Naive thymus-derived CD4-positive, alpha-beta T cell (primary cell): ENCODE measurements at regions of chr22 and their contacts with region 1.

Region 1: DNA sequence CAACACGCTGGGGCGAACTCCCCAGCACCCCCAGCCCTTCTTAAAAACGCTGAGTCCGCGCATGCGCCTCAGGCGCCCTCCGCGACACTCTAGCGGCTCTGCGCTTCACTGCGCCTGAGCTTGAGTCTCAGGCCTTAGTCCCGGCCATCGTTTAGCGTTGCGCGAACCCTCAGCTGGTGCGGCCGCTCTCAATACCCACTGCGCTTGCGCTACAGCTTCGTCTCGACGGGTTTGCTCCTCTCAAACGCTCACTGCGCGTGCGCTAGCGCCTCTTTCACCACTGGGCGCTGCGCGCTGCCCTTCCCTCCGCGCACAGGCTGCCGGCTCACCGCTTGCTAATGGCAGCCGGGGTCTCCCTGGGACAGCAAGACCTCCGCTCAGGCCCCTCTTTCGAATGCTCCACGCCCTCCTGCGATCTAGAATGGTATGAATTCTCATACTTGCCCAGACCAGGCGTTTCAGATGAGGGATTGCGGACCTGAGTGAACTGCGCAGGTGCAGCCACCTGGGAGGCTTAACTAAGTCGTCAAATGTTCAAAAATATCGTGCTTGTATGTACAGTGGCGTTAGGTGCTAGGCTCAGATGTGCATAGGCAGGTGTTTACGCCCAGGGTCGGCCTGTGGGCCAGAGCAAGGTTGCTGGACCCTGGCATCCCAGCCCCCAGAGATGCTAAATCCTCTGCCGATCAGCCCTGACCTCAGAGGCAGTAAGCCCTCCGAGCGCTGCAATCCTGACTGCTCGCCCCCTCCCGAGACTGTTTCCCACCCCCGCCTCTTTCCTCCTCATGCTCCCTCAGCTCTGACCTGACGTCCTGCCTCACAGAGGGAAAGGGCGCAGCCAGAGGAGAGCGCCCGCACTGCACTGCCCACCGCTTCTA is at the start of gene SLC2A11:
- DNase-seq: peak; percentile 84 to 91 (median 88)
- ATAC-seq: peak; percentile 97
- H3K4me3 ChIP-seq: peak within 1 kb of the TSS; percentile 99
- H3K4me3 Mint-ChIP-seq: peak within 1 kb of the TSS; percentile 87 to 99 (median 95)
- H3K27ac ChIP-seq: peak within 1 kb of the TSS; percentile 66
- H3K27ac Mint-ChIP-seq: peak within 1 kb of the TSS; percentile 86 to 97 (median 89)
- H3K4me1 ChIP-seq: peaks cover 5 to 7% of the 10 kb centered on the region in 2 donors
- H3K4me1 Mint-ChIP-seq: peaks cover 10 to 29% (median 22%) of the 10 kb centered on the region in 7 donors
- H3K27me3 ChIP-seq: no peaks in the 10 kb centered on the region
- H3K27me3 Mint-ChIP-seq: peaks cover 0 to 11% (median 0%) of the 10 kb centered on the region in 5 donors
- total RNA-seq, gene SLC2A11: 10.5 to 29.7 (median 14.7) TPM

Region 2: DNA sequence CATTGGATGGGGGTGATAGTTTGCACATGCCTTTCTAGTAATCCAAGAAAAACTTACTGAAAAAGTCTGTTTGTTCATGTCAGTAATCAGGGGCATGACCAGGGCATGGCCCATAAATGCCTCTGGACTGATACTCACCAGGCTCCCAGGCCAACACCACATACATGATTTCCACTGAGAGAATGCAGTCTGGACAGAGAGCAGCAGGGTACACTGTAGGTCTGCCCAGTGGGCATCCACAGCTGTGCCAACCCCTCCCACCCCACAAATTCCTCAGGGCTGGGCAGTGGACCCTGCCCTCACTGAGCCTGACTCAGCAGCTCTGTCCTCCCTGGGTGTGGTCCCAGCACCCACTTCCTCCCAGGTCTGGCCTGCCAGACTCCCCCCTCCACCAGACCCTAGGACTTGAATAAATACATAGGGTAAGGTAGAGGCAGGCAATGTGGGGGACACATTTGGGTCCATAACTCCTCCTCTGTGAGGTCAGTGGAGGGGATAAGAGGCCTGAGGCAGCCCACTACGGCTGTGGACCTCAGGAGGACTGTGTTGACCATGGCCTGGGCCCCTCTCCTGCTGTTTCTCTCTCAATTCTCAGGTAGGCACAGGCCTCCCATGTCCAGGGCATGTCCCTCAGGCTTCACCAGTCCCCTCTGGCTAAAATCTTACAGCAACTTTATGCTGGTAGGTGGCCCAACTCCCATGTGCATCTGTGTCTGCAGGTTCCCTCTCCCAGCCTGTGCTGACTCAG is 1783.0 kb before region 1 on chr22:
- CTCF ChIA-PET with region 1: no interaction called
- POLR2A ChIA-PET with region 1: no interaction called
- intact Hi-C with region 1: no loop called
- DNase-seq: no peak
- ATAC-seq: no peak
- H3K4me3 ChIP-seq: no peak overlapping the region
- H3K4me3 Mint-ChIP-seq: no peak overlapping the region
- H3K27ac ChIP-seq: no peak overlapping the region
- H3K27ac Mint-ChIP-seq: no peak overlapping the region
- H3K4me1 ChIP-seq: no peaks in the 10 kb centered on the region
- H3K4me1 Mint-ChIP-seq: peaks cover 0 to 3% (median 0%) of the 10 kb centered on the region in 7 donors
- H3K27me3 ChIP-seq: no peaks in the 10 kb centered on the region
- H3K27me3 Mint-ChIP-seq: peaks cover 16 to 40% (median 26%) of the 10 kb centered on the region in 5 donors

Region 3: GRCh38 chr22:23402275-23403151 is 455.3 kb before region 1 on chr22:
- CTCF ChIA-PET with region 1: no interaction called
- POLR2A ChIA-PET with region 1: no interaction called
- intact Hi-C with region 1: loop called in 1 of 2 experiments (anchors 5 kb)
- DNase-seq: peak; percentile 14 to 51 (median 36)
- ATAC-seq: peak; percentile 80
- H3K4me3 ChIP-seq: no peak overlapping the region
- H3K4me3 Mint-ChIP-seq: peak overlapping the region in 6 of 10 donors; percentile 41 to 67 (median 48)
- H3K27ac ChIP-seq: no peak overlapping the region
- H3K27ac Mint-ChIP-seq: no peak overlapping the region
- H3K4me1 ChIP-seq: no peaks in the 10 kb centered on the region
- H3K4me1 Mint-ChIP-seq: no peaks in the 10 kb centered on the region
- H3K27me3 ChIP-seq: no peaks in the 10 kb centered on the region
- H3K27me3 Mint-ChIP-seq: no peaks in the 10 kb centered on the region

Region 4: GRCh38 chr22:23696326-23696851 is 161.5 kb before region 1 on chr22:
- CTCF ChIA-PET with region 1: no interaction called
- POLR2A ChIA-PET with region 1: interaction called, 9 read pairs
- intact Hi-C with region 1: loop called in 1 of 2 experiments (anchors 5 kb)
- DNase-seq: peak; percentile 60 to 91 (median 86)
- ATAC-seq: peak; percentile 99
- H3K4me3 ChIP-seq: peak overlapping the region; percentile 71
- H3K4me3 Mint-ChIP-seq: peak overlapping the region; percentile 94 to 100 (median 98)
- H3K27ac ChIP-seq: peak overlapping the region; percentile 99
- H3K27ac Mint-ChIP-seq: peak overlapping the region; percentile 99 to 100 (median 100)
- H3K4me1 ChIP-seq: peaks cover 28 to 38% of the 10 kb centered on the region in 2 donors
- H3K4me1 Mint-ChIP-seq: peaks cover 37 to 64% (median 51%) of the 10 kb centered on the region in 7 donors
- H3K27me3 ChIP-seq: no peaks in the 10 kb centered on the region
- H3K27me3 Mint-ChIP-seq: no peaks in the 10 kb centered on the region

Region 5: GRCh38 chr22:23750714-23751440 is 107.0 kb before region 1 on chr22 and contains the start of gene ZNF70:
- CTCF ChIA-PET with region 1: no interaction called
- POLR2A ChIA-PET with region 1: interaction called, 15 read pairs
- intact Hi-C with region 1: no loop called
- DNase-seq: peak; percentile 78 to 88 (median 86)
- ATAC-seq: peak; percentile 99
- H3K4me3 ChIP-seq: peak within 1 kb of the TSS; percentile 79
- H3K4me3 Mint-ChIP-seq: peak within 1 kb of the TSS; percentile 63 to 88 (median 82)
- H3K27ac ChIP-seq: peak within 1 kb of the TSS; percentile 73
- H3K27ac Mint-ChIP-seq: peak within 1 kb of the TSS; percentile 37 to 91 (median 76)
- H3K4me1 ChIP-seq: peaks cover 0 to 9% of the 10 kb centered on the region in 2 donors
- H3K4me1 Mint-ChIP-seq: peaks cover 11 to 18% (median 13%) of the 10 kb centered on the region in 7 donors
- H3K27me3 ChIP-seq: no peaks in the 10 kb centered on the region
- H3K27me3 Mint-ChIP-seq: no peaks in the 10 kb centered on the region
- total RNA-seq, gene ZNF70: 3.1 to 7.9 (median 4.0) TPM

Region 6: GRCh38 chr22:23838681-23839468 is 19.0 kb before region 1 on chr22 and contains the start of gene DERL3:
- CTCF ChIA-PET with region 1: interaction called, 3 read pairs
- POLR2A ChIA-PET with region 1: interaction called, 3 read pairs
- intact Hi-C with region 1: loop called in 1 of 2 experiments (anchors 2 kb)
- DNase-seq: peak; percentile 80 to 97 (median 92)
- ATAC-seq: peak; percentile 94
- H3K4me3 ChIP-seq: peak within 1 kb of the TSS; percentile 70
- H3K4me3 Mint-ChIP-seq: peak within 1 kb of the TSS; percentile 81 to 96 (median 93)
- H3K27ac ChIP-seq: peak within 1 kb of the TSS; percentile 51
- H3K27ac Mint-ChIP-seq: peak within 1 kb of the TSS; percentile 43 to 97 (median 87)
- H3K4me1 ChIP-seq: peaks cover 4 to 5% of the 10 kb centered on the region in 2 donors
- H3K4me1 Mint-ChIP-seq: peaks cover 12 to 26% (median 20%) of the 10 kb centered on the region in 7 donors
- H3K27me3 ChIP-seq: no peaks in the 10 kb centered on the region
- H3K27me3 Mint-ChIP-seq: peaks cover 0 to 7% (median 0%) of the 10 kb centered on the region in 5 donors
- total RNA-seq, gene DERL3: 1.6 to 16.2 (median 6.5) TPM

Region 7: GRCh38 chr22:23893943-23894709 is 36.3 kb after region 1 on chr22 and contains the start of gene MIF:
- CTCF ChIA-PET with region 1: interaction called, 4 read pairs
- POLR2A ChIA-PET with region 1: interaction called, 21 read pairs
- intact Hi-C with region 1: loop called (anchors 2 to 5 kb)
- DNase-seq: peak; percentile 88 to 100 (median 94)
- ATAC-seq: peak; percentile 96
- H3K4me3 ChIP-seq: peak within 1 kb of the TSS; percentile 88
- H3K4me3 Mint-ChIP-seq: peak within 1 kb of the TSS; percentile 88 to 97 (median 94)
- H3K27ac ChIP-seq: peak within 1 kb of the TSS; percentile 93
- H3K27ac Mint-ChIP-seq: peak within 1 kb of the TSS; percentile 92 to 100 (median 97)
- H3K4me1 ChIP-seq: peaks cover 16% of the 10 kb centered on the region in 2 donors
- H3K4me1 Mint-ChIP-seq: peaks cover 12 to 39% (median 30%) of the 10 kb centered on the region in 7 donors
- H3K27me3 ChIP-seq: no peaks in the 10 kb centered on the region
- H3K27me3 Mint-ChIP-seq: no peaks in the 10 kb centered on the region
- total RNA-seq, gene MIF: 179 to 1,010 (median 197) TPM

Region 8: GRCh38 chr22:23913661-23914353 is 56.0 kb after region 1 on chr22:
- CTCF ChIA-PET with region 1: no interaction called
- POLR2A ChIA-PET with region 1: interaction called, 7 read pairs
- intact Hi-C with region 1: loop called in 1 of 2 experiments (anchors 2 kb)
- DNase-seq: peak; percentile 94 to 100 (median 97)
- ATAC-seq: peak; percentile 100
- H3K4me3 ChIP-seq: peak overlapping the region; percentile 83
- H3K4me3 Mint-ChIP-seq: peak overlapping the region; percentile 84 to 97 (median 93)
- H3K27ac ChIP-seq: peak overlapping the region; percentile 78
- H3K27ac Mint-ChIP-seq: peak overlapping the region; percentile 89 to 99 (median 98)
- H3K4me1 ChIP-seq: peaks cover 0 to 7% of the 10 kb centered on the region in 2 donors
- H3K4me1 Mint-ChIP-seq: peaks cover 7 to 34% (median 16%) of the 10 kb centered on the region in 7 donors
- H3K27me3 ChIP-seq: no peaks in the 10 kb centered on the region
- H3K27me3 Mint-ChIP-seq: peaks cover 0 to under 1% (median 0%) of the 10 kb centered on the region in 5 donors